ENCODE measurements at regions of chr6 and their contacts with region 1.

Region 1: DNA sequence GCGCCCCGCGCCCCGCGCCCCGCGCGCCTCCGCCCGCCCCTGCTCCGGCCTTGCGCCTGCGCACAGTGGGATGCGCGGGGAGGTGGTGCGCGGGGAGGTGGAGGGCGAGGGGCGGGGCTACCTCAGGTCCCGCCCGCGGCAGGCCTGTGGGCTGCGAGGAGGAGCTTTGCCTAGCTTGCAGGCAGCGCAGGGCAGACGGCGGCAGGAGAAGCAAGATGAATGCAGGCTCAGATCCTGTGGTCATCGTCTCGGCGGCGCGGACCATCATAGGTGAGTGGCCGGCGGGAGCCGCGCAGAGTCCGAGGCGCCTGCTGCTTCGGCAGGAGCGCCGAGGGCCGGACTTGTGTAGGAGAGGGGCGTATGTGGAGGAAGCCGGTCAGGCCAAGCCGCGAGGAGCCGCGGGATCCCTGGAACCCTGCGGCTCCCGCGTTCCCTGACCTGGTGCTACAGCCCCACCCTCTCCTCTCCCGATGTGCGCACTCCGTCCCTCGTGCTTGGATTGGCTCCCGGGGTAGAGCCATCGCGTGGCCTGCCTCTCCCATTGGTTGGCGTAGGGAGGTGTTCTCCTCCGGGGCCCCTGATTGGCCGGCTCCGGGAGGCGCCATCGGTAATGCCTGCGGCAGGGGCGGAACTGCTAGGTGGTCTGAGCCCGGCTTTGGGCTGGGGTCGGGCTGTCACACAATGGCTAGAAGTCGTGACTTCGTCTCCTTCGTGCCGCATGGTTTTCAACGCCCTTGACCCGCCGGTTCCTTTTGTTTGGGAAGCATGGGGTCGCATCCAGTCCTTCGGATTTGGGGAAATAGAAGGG is at the start of gene ACAT2:
- DNase-seq: peak; percentile 95 to 98 (median 97)
- ATAC-seq: peak; percentile 98 to 99 (median 99)
- H3K4me3 ChIP-seq: peak within 1 kb of the TSS; percentile 77 to 100 (median 94)
- H3K27ac ChIP-seq: peak within 1 kb of the TSS; percentile 90 to 100 (median 98)
- H3K4me1 ChIP-seq: peaks cover 0 to 25% (median 12%) of the 10 kb centered on the region in 12 donors
- H3K27me3 ChIP-seq: no peaks in the 10 kb centered on the region
- CTCF ChIP-seq: peak in 2 of 12 donors; percentile 14 to 15
- POLR2A ChIP-seq: peak; percentile 11 to 53
- total RNA-seq, gene ACAT2: 1.3 to 9.9 (median 7.3) TPM

Region 2: GRCh38 chr6:159726918-159727716 is 35.0 kb before region 1 on chr6 and contains the start of gene WTAP:
- intact Hi-C with region 1: loop called in 4 of 10 experiments (anchors 1 to 5 kb)
- DNase-seq: peak; percentile 95 to 97 (median 97)
- ATAC-seq: peak; percentile 96 to 98 (median 97)
- H3K4me3 ChIP-seq: peak within 1 kb of the TSS; percentile 64 to 98 (median 92)
- H3K27ac ChIP-seq: peak within 1 kb of the TSS; percentile 95 to 100 (median 99)
- H3K4me1 ChIP-seq: peaks cover 3 to 52% (median 42%) of the 10 kb centered on the region in 12 donors
- H3K27me3 ChIP-seq: no peaks in the 10 kb centered on the region
- CTCF ChIP-seq: no peak
- POLR2A ChIP-seq: peak in 1 of 2 donors; percentile 72
- total RNA-seq, gene WTAP: 39.0 to 70.2 (median 48.2) TPM

Region 3: DNA sequence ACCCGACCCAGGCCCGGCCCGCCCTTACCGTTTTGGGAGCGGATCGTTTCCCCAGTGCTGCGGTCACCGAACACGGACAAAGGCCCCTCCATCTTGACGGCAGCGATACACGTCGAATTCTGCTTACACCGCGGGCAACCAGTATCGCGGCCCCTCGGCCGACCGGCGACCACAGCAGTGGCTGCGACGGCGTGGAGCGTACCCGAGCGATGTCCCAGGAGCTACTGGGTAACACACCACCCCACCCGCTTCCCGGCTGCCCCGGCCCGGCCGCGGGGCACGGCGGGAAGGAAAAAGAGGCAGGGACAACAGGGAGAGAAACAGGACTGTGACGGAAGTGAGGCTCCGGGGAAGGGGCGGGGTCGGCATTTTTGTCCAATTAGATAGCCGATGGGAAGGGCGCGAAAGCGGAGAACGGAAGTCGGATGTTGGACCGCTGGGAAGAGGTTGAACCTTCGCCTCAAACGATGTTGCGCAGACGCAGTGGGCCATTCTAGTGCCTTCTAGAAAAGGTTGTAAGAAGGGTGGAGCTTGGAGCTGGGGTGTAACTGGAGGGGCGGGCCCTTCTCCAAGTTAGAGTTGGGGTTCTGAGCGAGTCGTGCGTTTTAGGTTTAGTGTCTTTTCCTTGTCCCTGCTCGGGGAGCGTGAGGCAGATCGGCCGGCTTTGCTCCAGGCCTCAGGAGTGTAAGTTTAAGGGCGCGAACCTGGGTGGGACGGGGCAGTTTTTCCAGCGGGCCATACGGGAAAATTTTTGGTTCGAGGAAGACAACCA is 27.5 kb after region 1 on chr6 and contains the start of gene TCP1:
- intact Hi-C with region 1: loop called in 2 of 10 experiments (anchors 1 to 2 kb)
- DNase-seq: peak; percentile 99 to 100 (median 100)
- ATAC-seq: peak; percentile 92 to 95 (median 94)
- H3K4me3 ChIP-seq: peak within 1 kb of the TSS; percentile 80 to 100 (median 93)
- H3K27ac ChIP-seq: peak within 1 kb of the TSS; percentile 73 to 99 (median 96)
- H3K4me1 ChIP-seq: peaks cover 5 to 50% (median 35%) of the 10 kb centered on the region in 12 donors
- H3K27me3 ChIP-seq: no peaks in the 10 kb centered on the region
- CTCF ChIP-seq: no peak
- POLR2A ChIP-seq: peak in 1 of 2 donors; percentile 89
- total RNA-seq, gene TCP1: 107 to 184 (median 142) TPM